A673 (cell line): ENCODE measurements at regions of chr5 and their contacts with region 1.

Region 1: GRCh38 chr5:116853992-116854391 is 279.4 kb upstream of the SEMA6A start:
- DNase-seq: no peak
- H3K4me3 ChIP-seq: no peak overlapping the region
- H3K27ac ChIP-seq: no peak overlapping the region
- H3K4me1 ChIP-seq: no peaks in the 10 kb centered on the region
- H3K27me3 ChIP-seq: no peaks in the 10 kb centered on the region
- CTCF ChIP-seq: no peak

Region 2: DNA sequence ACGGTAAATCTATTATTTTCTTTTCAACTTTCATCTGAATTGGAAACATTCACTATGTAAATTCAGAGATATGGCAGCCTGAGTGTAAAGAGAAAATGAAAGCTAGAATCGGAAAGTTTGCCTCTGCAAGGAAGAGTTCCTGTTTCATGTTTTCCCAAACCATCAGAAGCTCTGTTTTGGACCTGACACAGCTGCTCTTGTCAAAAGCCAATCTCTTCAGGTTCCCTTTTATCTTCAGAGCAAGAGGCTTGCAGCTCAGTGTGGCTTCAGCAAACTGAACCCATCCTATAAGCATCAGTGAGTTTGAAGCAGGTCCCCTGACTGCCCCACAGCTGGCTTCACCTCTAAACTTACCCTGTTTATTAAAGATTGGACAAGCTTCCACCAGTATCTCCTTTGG is 1034.7 kb after region 1 on chr5:
- CTCF ChIA-PET with region 1: no interaction called
- POLR2A ChIA-PET with region 1: interaction called, 10 read pairs
- intact Hi-C with region 1: no loop called
- DNase-seq: no peak
- H3K4me3 ChIP-seq: no peak overlapping the region
- H3K27ac ChIP-seq: no peak overlapping the region
- H3K4me1 ChIP-seq: no peaks in the 10 kb centered on the region
- H3K27me3 ChIP-seq: no peaks in the 10 kb centered on the region
- CTCF ChIP-seq: no peak